ENCODE measurements at regions of chr9 and their contacts with region 1.

Region 1: DNA sequence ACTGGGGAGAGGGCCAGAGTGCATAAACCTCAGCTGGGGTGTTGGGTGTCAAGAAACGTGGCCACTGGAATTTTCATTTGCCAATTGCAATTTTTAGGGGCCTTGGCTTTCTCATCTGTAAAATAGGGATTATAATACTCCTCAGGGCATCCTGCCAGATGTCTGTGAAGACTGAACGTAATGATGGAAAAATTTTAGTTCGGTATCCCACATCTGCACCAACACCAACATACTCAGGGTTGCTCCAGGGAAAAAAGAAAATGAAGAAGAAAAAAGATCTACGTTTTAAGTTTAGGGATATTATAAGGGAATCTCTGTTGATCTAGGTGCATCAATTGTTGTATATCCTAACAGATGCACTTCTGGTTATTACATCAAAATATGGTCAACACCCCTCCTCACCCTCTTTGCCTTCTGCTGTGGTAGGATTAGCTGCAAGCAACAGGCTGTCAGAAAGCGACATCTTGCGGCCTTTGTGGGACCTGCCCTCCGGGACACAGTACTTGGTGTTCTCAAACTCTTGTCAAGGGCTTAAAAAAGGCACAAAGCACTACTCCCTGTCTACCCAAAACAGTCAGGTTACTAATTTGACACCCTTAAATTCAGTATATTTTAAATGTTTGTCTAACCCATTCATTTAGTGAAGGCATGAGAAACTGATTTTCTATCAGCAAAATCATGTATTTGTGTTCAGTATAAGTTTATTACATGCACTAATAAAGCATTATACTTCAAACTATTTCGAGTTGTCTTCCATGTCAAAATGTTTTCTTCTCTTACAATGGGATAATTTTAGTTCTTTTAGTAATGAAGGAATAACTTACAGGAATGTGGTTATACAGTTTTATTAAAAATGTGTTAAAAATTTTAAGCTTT is 8.3 kb upstream of the TBC1D2 start:
- DNase-seq: peak; percentile 54 to 82 (median 77)
- ATAC-seq: peak; percentile 100
- H3K4me3 ChIP-seq: no peak overlapping the region
- H3K4me3 Mint-ChIP-seq: no peak overlapping the region
- H3K27ac ChIP-seq: no peak overlapping the region
- H3K27ac Mint-ChIP-seq: peak overlapping the region in 1 of 9 donors; percentile 59
- H3K4me1 ChIP-seq: no peaks in the 10 kb centered on the region
- H3K4me1 Mint-ChIP-seq: peaks cover 0 to 3% (median 0%) of the 10 kb centered on the region in 7 donors
- H3K27me3 ChIP-seq: no peaks in the 10 kb centered on the region
- H3K27me3 Mint-ChIP-seq: peaks cover 0 to 23% (median 0%) of the 10 kb centered on the region in 5 donors

Region 2: DNA sequence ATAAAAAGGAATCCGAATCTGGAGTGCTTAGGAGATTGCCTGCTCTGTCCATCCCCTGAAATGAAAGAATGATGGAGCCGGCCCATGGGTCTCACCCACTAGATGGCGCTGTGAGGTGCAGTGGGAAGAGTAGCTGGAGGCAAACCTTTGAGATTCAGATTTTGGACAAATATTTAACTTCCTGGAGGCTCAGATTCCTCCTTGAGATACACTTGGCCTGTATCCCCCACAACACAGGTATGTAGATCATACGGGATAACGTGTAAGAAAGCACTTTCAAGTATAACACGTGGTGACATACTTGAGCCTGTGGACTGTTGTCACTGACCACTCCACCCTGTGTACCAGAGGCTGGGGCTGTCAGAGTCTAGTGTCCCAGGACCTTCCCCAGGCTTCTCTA is 373.7 kb before region 1 on chr9:
- CTCF ChIA-PET with region 1: no interaction called
- POLR2A ChIA-PET with region 1: no interaction called
- intact Hi-C with region 1: loop called in 1 of 2 experiments (anchors 1 kb)
- DNase-seq: peak; percentile 40 to 73 (median 57)
- ATAC-seq: peak; percentile 88
- H3K4me3 ChIP-seq: no peak overlapping the region
- H3K4me3 Mint-ChIP-seq: peak overlapping the region in 1 of 10 donors; percentile 51
- H3K27ac ChIP-seq: no peak overlapping the region
- H3K27ac Mint-ChIP-seq: peak overlapping the region in 5 of 9 donors; percentile 28 to 81 (median 68)
- H3K4me1 ChIP-seq: peaks cover 0 to 4% of the 10 kb centered on the region in 2 donors
- H3K4me1 Mint-ChIP-seq: peaks cover 6 to 23% (median 18%) of the 10 kb centered on the region in 7 donors
- H3K27me3 ChIP-seq: no peaks in the 10 kb centered on the region
- H3K27me3 Mint-ChIP-seq: no peaks in the 10 kb centered on the region

Region 3: DNA sequence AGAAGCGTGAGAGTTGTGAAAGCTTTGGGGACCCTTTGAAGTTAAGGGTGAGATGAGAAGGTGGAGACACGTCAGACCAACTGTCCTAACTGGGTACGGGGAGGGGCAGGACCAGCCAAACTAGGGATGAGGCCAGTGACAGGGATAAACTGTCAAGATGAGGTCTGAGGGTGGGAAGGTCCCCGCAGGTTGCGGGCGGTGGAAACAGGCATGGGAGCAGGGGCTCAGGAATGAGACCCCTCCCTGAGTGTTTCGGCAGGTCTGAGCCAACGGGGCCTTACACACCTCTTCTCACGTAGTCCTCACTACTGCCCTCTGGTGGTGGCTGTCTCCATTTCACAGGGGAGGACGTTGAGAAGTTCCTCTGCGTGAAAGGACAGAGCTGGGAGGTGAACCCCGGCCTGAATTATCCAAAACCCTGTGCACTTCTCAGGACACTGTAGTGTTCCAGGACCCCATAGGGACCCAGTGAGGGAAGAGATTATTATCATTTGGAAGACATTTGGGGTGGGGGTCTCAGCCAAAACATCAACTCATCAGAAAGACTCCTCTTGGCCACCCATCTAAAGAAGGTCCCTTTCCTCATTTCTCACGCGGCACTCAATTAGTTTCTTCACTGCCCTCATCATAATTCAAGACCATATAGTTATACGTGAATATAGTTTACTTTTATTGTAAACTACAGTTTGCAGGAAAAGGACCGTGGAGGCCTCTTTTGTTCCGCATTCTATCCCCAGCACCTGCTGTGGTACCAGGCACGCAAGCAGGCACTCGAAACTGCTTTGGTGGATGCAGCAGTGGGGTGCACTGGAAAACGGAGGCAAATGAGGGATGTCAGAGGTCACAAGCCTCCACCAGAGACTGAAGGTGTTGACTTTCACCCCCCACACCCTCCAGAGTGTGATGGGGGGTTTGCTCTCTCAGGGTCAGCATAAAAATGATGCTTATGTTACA is 228.8 kb before region 1 on chr9:
- CTCF ChIA-PET with region 1: interaction called, 5 read pairs
- POLR2A ChIA-PET with region 1: no interaction called
- intact Hi-C with region 1: loop called in 1 of 2 experiments (anchors 1 kb)
- DNase-seq: peak; percentile 76 to 92 (median 86)
- ATAC-seq: peak; percentile 99
- H3K4me3 ChIP-seq: no peak overlapping the region
- H3K4me3 Mint-ChIP-seq: peak overlapping the region in 8 of 10 donors; percentile 11 to 63 (median 41)
- H3K27ac ChIP-seq: no peak overlapping the region
- H3K27ac Mint-ChIP-seq: peak overlapping the region in 8 of 9 donors; percentile 9 to 87 (median 66)
- H3K4me1 ChIP-seq: peaks cover 0 to 4% of the 10 kb centered on the region in 2 donors
- H3K4me1 Mint-ChIP-seq: peaks cover 5 to 12% (median 8%) of the 10 kb centered on the region in 7 donors
- H3K27me3 ChIP-seq: no peaks in the 10 kb centered on the region
- H3K27me3 Mint-ChIP-seq: peaks cover 0 to 8% (median 0%) of the 10 kb centered on the region in 5 donors

Region 4: GRCh38 chr9:98558575-98558974 is 294.9 kb after region 1 on chr9:
- CTCF ChIA-PET with region 1: no interaction called
- POLR2A ChIA-PET with region 1: no interaction called
- intact Hi-C with region 1: no loop called
- DNase-seq: no peak
- ATAC-seq: no peak
- H3K4me3 ChIP-seq: no peak overlapping the region
- H3K4me3 Mint-ChIP-seq: no peak overlapping the region
- H3K27ac ChIP-seq: no peak overlapping the region
- H3K27ac Mint-ChIP-seq: no peak overlapping the region
- H3K4me1 ChIP-seq: no peaks in the 10 kb centered on the region
- H3K4me1 Mint-ChIP-seq: no peaks in the 10 kb centered on the region
- H3K27me3 ChIP-seq: no peaks in the 10 kb centered on the region
- H3K27me3 Mint-ChIP-seq: peaks cover 0 to 19% (median 4%) of the 10 kb centered on the region in 5 donors

Region 5: GRCh38 chr9:98726735-98727134 is 463.0 kb after region 1 on chr9:
- CTCF ChIA-PET with region 1: no interaction called
- POLR2A ChIA-PET with region 1: no interaction called
- intact Hi-C with region 1: no loop called
- DNase-seq: no peak
- ATAC-seq: peak; percentile 38
- H3K4me3 ChIP-seq: no peak overlapping the region
- H3K4me3 Mint-ChIP-seq: no peak overlapping the region
- H3K27ac ChIP-seq: no peak overlapping the region
- H3K27ac Mint-ChIP-seq: no peak overlapping the region
- H3K4me1 ChIP-seq: no peaks in the 10 kb centered on the region
- H3K4me1 Mint-ChIP-seq: peaks cover 0 to 1% (median 0%) of the 10 kb centered on the region in 7 donors
- H3K27me3 ChIP-seq: no peaks in the 10 kb centered on the region
- H3K27me3 Mint-ChIP-seq: peaks cover 18 to 36% (median 23%) of the 10 kb centered on the region in 5 donors

Measured in naive thymus-derived CD4-positive, alpha-beta T cell (primary cell).